Left cardiac atrium (tissue), 4 donors: ENCODE measurements at regions of chr1 and their contacts with region 1.

Region 1: DNA sequence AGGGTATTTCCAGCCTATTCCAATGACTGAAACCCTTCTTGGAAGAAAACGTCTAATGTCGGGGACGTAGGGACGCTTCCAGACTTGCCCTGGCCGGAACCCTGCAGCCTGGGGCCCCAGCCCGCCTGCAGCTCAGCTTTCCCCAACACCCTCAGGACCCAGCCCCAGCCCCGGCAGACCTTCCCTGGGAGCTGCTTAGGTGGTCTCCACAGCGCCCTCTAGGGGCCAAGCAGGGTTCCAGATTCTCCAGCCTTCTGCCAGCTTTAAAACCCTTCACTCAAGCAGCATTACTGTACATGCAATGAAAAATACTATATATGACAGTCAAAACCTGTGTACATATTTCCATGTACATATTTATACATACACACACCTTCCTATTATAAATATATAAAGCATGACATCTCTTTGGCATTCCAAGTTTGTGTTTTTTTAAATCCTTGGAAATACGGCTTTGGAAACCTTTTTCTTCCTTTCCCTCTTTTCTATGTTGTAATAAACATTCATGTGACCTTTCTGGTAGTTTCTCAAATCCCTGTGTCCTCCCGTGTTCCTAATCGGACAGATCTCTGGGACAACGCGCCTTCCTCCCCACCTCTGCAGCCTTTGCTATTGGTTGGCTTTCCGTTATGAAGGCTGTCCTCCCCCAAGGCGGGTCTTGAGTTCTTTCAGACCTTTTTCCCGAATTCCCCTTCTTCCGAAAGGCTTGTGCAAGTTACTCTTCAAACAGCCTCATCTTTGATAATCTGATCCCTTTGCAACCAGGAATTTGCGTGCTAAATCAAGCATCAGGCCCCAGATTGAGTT is 60.3 kb downstream of the STUM start:
- DNase-seq: peak; percentile 65
- ATAC-seq: peak; percentile 50

Region 2: DNA sequence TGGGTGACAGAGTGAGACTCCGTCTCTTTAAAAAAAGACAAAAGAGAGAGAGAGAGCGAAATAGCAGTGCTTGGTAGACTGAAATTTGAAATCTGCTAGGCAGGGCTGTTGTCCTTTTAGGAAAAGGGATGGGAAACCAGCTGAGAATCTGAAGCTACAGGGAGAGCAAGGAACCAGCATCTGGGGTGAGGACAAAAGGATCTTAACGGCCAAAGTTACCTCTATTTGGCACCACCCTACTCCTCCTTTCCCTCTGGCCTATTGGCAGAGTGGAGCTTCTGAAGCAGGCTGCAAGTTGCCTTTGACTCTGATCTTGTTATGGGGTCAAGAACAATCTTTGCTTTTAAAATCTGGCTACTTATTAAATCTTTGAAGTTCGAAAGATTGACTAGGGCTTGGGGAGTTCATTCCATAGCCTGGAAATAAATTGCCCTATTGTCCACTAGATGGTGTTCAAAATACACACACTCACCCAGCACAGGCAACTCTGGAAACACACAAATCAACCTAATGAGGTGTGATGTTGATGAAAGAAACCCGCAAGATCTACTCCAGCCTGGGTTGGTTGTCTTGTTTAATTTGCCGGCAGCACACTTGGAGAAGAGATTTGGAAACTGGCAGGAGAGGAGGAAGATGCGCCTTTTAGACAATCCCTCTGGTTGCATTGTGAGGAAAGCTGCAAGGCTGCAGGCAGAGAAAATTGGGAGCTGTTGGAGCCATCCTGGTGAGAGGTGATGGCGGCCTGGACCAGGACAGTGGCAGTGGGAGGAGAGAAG is 184.5 kb before region 1 on chr1:
- intact Hi-C with region 1: loop called (anchors 5 to 10 kb)
- DNase-seq: no peak
- ATAC-seq: peak; percentile 81 to 92

Region 3: DNA sequence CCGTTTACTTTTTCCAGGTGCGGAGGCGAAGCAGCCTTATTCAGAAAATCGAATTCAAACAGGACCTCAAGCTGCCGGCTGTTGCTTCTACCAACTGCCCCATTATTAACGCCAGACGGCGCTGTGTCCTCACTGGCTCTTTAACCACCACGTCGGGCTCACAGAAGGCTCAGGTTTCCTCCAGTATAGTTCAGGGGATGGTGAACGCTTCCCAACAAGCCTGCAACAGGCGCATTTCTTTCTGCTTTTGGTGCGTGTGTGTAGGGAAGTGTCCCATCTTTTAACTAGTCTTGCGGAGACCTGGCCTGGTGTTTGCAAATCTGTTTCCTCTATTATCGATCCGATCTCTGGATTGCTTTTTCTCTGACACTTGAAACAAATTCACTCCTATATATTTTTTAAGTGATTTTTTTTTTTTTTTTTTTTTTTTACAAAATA is 61.1 kb before region 1 on chr1:
- intact Hi-C with region 1: loop called in 1 of 2 experiments (anchors 2 kb)
- DNase-seq: peak; percentile 87
- ATAC-seq: peak; percentile 77 to 83